CD4-positive, alpha-beta T cell (primary cell): ENCODE measurements at regions of chr17 and their contacts with region 1.

Region 1: DNA sequence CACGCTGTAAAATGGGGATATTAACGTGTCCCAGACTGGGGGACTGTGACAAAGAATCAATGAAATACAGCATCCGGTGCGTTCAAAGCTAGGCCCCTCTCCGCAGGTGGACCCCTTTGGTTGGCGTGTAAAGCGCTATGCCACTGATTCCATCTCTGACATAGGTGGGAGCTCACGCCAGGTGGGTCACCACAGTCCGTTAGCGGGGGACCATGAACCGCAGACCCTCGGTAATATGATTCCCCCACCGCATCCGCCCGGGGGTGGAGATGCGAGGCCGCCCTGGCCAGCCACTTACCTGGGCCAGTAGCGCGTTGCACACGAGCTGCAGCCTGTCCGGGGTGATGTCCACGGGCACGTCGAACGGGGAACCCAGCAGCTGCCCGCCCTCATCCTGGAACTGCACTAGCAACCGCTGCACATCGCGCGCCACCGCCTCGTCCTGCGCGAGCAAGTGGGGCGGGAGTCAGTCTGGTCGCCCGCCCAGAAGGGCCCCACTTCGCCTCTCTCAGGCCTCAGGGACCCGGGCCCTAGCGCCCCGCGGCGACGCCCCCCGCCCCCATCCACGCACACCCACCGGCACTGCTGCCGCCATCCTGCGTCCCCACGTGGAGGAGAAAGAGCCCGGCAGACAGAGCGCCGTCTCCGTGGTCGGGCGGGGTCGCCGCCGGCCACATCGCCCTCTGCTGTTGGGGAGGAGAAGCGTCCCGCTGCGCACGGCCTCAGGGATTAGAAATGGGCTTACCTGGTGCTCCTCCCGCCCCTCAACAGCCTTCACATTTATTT is at the start of gene NLE1:
- DNase-seq: peak; percentile 84 to 93 (median 88)
- ATAC-seq: peak; percentile 97
- H3K4me3 ChIP-seq: peak within 1 kb of the TSS; percentile 98
- H3K4me3 Mint-ChIP-seq: peak within 1 kb of the TSS; percentile 90
- H3K27ac ChIP-seq: peak within 1 kb of the TSS; percentile 13 to 64
- H3K27ac Mint-ChIP-seq: peak within 1 kb of the TSS; percentile 75
- H3K4me1 ChIP-seq: peaks cover 28% of the 10 kb centered on the region
- H3K4me1 Mint-ChIP-seq: peaks cover 17% of the 10 kb centered on the region
- H3K27me3 ChIP-seq: no peaks in the 10 kb centered on the region
- H3K27me3 Mint-ChIP-seq: no peaks in the 10 kb centered on the region
- CTCF ChIP-seq: peak; percentile 92
- total RNA-seq, gene NLE1: 8.9 to 9.5 TPM

Region 2: DNA sequence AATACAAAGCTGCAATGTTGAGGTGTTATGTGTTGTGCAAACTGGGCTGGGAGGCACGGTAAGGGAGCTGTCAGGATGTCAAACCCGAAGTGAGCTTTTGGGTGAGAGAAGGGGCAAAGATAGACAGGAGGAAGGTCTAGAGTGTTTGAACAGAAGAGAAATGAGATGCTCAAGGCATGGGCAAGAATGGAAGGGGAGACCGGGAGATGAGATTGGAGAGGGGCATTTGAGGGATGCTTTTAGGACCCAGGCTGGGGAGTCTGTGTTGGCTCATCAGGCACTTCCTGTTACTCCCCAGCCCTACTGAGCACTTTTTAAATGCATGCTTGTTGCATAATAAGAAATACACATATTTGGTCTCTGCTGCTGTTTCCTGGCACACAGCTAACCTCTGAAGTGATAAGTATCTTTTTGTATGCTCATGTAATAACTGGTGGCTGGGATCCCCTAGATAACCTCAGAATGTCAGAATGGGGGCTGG is 19.4 kb after region 1 on chr17:
- CTCF ChIA-PET with region 1: interaction called, 5 read pairs
- POLR2A ChIA-PET with region 1: interaction called, 18 read pairs
- intact Hi-C with region 1: no loop called
- DNase-seq: peak in 6 of 14 experiments; percentile 15 to 78 (median 56)
- ATAC-seq: peak; percentile 70
- H3K4me3 ChIP-seq: peak overlapping the region; percentile 30
- H3K4me3 Mint-ChIP-seq: peak overlapping the region; percentile 67
- H3K27ac ChIP-seq: peak overlapping the region; percentile 62 to 68
- H3K27ac Mint-ChIP-seq: peak overlapping the region; percentile 89
- H3K4me1 ChIP-seq: peaks cover 53% of the 10 kb centered on the region
- H3K4me1 Mint-ChIP-seq: peaks cover 66% of the 10 kb centered on the region
- H3K27me3 ChIP-seq: no peaks in the 10 kb centered on the region
- H3K27me3 Mint-ChIP-seq: no peaks in the 10 kb centered on the region
- CTCF ChIP-seq: no peak

Region 3: DNA sequence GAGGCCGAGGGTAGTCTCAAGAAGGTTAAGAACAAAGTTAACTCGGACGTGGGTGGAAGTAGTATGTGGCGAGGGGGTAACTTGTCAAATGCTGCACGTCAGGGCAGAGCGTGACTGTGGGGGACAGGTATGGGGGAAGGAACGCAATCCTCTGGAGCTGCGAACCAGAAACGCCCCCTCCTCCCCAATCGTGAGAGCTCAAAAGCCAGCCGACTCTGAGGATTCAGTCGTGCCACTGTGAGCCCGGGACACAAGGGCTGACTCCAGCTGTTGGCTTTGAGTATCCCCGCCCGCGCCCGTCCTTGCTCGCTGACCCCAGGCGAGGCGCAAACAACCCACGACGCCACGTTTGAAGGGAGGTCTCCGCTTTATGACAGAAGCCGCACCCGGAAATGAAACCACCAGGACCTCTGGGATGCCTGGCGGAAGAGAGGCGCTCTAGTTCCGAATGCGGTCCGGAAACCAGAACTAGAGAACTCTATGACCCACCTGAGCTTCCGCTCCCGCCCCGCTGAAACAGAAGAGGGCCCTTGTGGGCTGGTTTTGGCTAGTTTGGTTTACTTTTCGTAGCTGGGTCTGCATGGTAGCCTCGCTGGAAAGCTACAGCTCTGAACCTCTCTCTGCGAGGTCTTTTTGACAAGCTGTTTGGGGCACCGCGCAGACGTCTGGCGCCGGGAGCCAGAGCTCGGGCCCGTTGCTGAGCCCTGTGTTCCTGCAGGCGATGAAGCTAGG is 436.5 kb after region 1 on chr17 and contains the start of gene PEX12:
- CTCF ChIA-PET with region 1: interaction called, 6 read pairs
- POLR2A ChIA-PET with region 1: interaction called, 15 read pairs
- intact Hi-C with region 1: loop called (anchors 1 to 2 kb)
- DNase-seq: peak; percentile 77 to 96 (median 86)
- ATAC-seq: peak; percentile 96
- H3K4me3 ChIP-seq: peak within 1 kb of the TSS; percentile 85
- H3K4me3 Mint-ChIP-seq: peak within 1 kb of the TSS; percentile 92
- H3K27ac ChIP-seq: peak within 1 kb of the TSS; percentile 90 to 93
- H3K27ac Mint-ChIP-seq: peak within 1 kb of the TSS; percentile 97
- H3K4me1 ChIP-seq: peaks cover 21% of the 10 kb centered on the region
- H3K4me1 Mint-ChIP-seq: peaks cover 42% of the 10 kb centered on the region
- H3K27me3 ChIP-seq: no peaks in the 10 kb centered on the region
- H3K27me3 Mint-ChIP-seq: no peaks in the 10 kb centered on the region
- CTCF ChIP-seq: no peak
- total RNA-seq, gene PEX12: 3.0 to 3.2 TPM